ENCODE measurements at regions of chr5 and their contacts with region 1.

Region 1: GRCh38 chr5:155260798-155261197 is 247.2 kb downstream of the KIF4B start:
- DNase-seq: peak; percentile 49
- ATAC-seq: peak; percentile 97
- H3K4me3 Mint-ChIP-seq: no peak overlapping the region
- H3K27ac Mint-ChIP-seq: no peak overlapping the region
- H3K4me1 Mint-ChIP-seq: 0 out of 2 replicates have a peak, but pooled peaks cover 3% of the 10 kb centered on the region
- H3K27me3 Mint-ChIP-seq: no peaks in the 10 kb centered on the region
- CTCF ChIP-seq: 0 out of 2 replicates have a peak, but pooled peaks have one; percentile 22

Region 2: GRCh38 chr5:155140651-155141050 is 120.1 kb before region 1 on chr5:
- CTCF ChIA-PET with region 1: interaction called, 52 read pairs
- POLR2A ChIA-PET with region 1: no interaction called
- DNase-seq: no peak
- ATAC-seq: no peak
- H3K4me3 Mint-ChIP-seq: no peak overlapping the region
- H3K27ac Mint-ChIP-seq: peak overlapping the region; percentile 83; the same call in 1 of the 2 replicates
- H3K4me1 Mint-ChIP-seq: peaks cover 31% of the 10 kb centered on the region
- H3K27me3 Mint-ChIP-seq: no peaks in the 10 kb centered on the region
- CTCF ChIP-seq: no peak

Region 3: GRCh38 chr5:155250596-155250995 is 10.2 kb before region 1 on chr5:
- CTCF ChIA-PET with region 1: no interaction called
- POLR2A ChIA-PET with region 1: no interaction called
- DNase-seq: no peak
- ATAC-seq: no peak
- H3K4me3 Mint-ChIP-seq: no peak overlapping the region
- H3K27ac Mint-ChIP-seq: no peak overlapping the region
- H3K4me1 Mint-ChIP-seq: peaks cover 5% of the 10 kb centered on the region; the same call in 1 of the 2 replicates
- H3K27me3 Mint-ChIP-seq: no peaks in the 10 kb centered on the region
- CTCF ChIP-seq: no peak

Region 4: DNA sequence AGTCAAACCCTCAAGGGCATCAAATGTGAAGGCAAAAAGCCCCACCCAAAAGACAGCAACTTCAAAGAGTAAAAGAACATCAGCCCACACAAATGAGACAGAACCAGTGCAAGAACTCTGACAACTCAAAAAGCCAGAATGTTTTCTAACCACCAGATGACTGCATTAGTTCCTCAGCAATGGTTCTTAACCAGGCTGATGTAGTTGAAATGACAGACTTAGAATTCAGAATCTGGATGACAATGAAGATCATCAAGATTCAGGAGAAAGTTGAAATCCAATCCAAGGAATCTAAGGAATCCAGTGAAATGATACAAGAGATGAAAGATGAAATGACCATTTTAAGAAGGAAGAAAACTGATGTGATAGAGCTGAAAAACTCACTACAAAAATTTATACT is 92.4 kb after region 1 on chr5:
- CTCF ChIA-PET with region 1: no interaction called
- POLR2A ChIA-PET with region 1: no interaction called
- DNase-seq: no peak
- ATAC-seq: no peak
- H3K4me3 Mint-ChIP-seq: no peak overlapping the region
- H3K27ac Mint-ChIP-seq: no peak overlapping the region
- H3K4me1 Mint-ChIP-seq: no peaks in the 10 kb centered on the region
- H3K27me3 Mint-ChIP-seq: no peaks in the 10 kb centered on the region
- CTCF ChIP-seq: no peak